Right ventricle myocardium inferior (tissue), 1 donor: ENCODE measurements at regions of chr17 and their contacts with region 1.

Region 1: DNA sequence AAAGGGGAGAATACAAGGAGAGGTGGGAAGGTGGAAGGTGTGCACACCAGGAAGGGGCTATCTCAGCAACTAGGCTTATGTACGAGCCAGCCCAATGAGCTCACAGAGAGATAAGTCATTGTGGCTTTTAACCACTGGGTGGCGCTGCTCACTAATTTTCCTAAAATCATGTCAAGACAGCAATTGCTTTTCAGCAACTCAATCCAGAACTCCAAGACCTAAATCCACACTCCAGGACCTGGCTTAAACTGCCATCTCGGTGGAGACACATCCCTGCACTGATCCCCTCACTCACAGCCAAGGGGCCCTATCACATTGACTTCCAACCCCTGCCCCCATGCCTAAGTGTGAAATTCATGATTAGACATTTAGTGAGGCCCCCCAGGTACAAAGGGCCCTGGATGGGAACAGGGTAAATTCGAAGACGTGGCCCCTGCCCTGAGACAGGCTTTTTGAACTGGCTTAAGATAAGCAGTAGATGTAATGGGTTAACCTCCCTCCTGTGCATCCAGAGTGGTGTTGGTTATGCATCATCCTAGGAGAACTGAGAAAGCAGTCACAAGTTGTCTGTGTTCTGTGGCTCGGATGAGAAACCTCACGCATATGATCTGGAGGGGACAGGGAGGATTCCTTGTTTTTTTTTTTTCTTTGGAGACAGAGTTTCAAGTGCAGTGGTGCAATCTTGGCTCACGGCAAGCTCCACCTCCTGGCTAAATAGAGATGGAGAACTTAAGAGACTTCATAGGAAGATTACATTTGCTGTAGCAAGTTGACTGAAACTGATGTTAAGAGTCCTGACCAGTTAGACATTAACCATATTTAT is 11.5 kb downstream of the CCL16 start:
- DNase-seq: no peak
- ATAC-seq: peak; percentile 70

Region 2: GRCh38 chr17:36017799-36018198 is 48.0 kb after region 1 on chr17 and contains the start of gene CCL23:
- intact Hi-C with region 1: no loop called
- DNase-seq: no peak
- ATAC-seq: no peak
- total RNA-seq, gene CCL23: not detected

Region 3: GRCh38 chr17:36072431-36073121 is 102.8 kb after region 1 on chr17:
- intact Hi-C with region 1: loop called (anchors 5 kb)
- DNase-seq: peak; percentile 83
- ATAC-seq: no peak

Region 4: GRCh38 chr17:36105781-36106492 is 136.2 kb after region 1 on chr17:
- intact Hi-C with region 1: no loop called
- DNase-seq: no peak
- ATAC-seq: no peak

Region 5: GRCh38 chr17:36148559-36149295 is 179.0 kb after region 1 on chr17:
- intact Hi-C with region 1: loop called (anchors 10 kb)
- DNase-seq: peak; percentile 86
- ATAC-seq: peak; percentile 89

Region 6: GRCh38 chr17:36486204-36487194 is 516.7 kb after region 1 on chr17 and contains the start of gene ZNHIT3:
- intact Hi-C with region 1: loop called (anchors 2 kb)
- DNase-seq: peak; percentile 96
- ATAC-seq: peak; percentile 93
- total RNA-seq, gene ZNHIT3: 21.3 TPM